Naive thymus-derived CD4-positive, alpha-beta T cell (primary cell): ENCODE measurements at regions of chr16 and their contacts with region 1.

Region 1: GRCh38 chr16:1782352-1783091 is at the starts of genes NUBP2 and SPSB3:
- DNase-seq: peak; percentile 83 to 98 (median 97)
- ATAC-seq: peak; percentile 92
- H3K4me3 ChIP-seq: peak within 1 kb of the TSS; percentile 92
- H3K4me3 Mint-ChIP-seq: peak within 1 kb of the TSS; percentile 90 to 98 (median 94)
- H3K27ac ChIP-seq: peak within 1 kb of the TSS; percentile 76
- H3K27ac Mint-ChIP-seq: peak within 1 kb of the TSS; percentile 77 to 98 (median 93)
- H3K4me1 ChIP-seq: peaks cover 13 to 28% of the 10 kb centered on the region in 2 donors
- H3K4me1 Mint-ChIP-seq: peaks cover 0 to 48% (median 22%) of the 10 kb centered on the region in 7 donors
- H3K27me3 ChIP-seq: no peaks in the 10 kb centered on the region
- H3K27me3 Mint-ChIP-seq: peaks cover 0 to 2% (median 0%) of the 10 kb centered on the region in 5 donors
- total RNA-seq, gene NUBP2: 39.3 to 60.2 (median 48.6) TPM
- total RNA-seq, gene SPSB3: 38.2 to 127 (median 72.3) TPM

Region 2: DNA sequence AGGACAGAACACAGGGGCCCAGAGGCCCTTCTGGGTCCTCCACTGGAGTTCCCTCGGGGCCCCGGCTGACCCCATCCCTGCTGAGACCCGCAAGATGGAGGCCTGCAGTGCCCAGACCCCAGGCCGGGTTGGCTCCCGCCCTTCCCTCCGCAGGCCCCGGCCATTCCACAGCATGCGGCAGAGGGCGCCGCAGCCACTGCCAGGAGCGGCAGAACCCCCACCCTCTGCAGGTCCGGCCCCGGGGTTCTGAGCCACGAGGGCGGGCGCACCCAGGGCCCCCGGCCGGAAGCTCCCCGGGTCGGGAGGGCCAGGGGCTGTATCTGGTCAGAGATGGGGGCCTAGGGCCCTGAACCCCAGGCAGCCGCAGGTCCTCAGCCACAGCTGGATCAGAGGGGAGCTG is 354.0 kb before region 1 on chr16:
- CTCF ChIA-PET with region 1: no interaction called
- POLR2A ChIA-PET with region 1: interaction called, 4 read pairs
- intact Hi-C with region 1: loop called in 1 of 2 experiments (anchors 10 kb)
- DNase-seq: peak in 6 of 9 donors; percentile 23 to 63 (median 38)
- ATAC-seq: peak; percentile 73
- H3K4me3 ChIP-seq: no peak overlapping the region
- H3K4me3 Mint-ChIP-seq: peak overlapping the region in 1 of 10 donors; percentile 53
- H3K27ac ChIP-seq: no peak overlapping the region
- H3K27ac Mint-ChIP-seq: no peak overlapping the region
- H3K4me1 ChIP-seq: no peaks in the 10 kb centered on the region
- H3K4me1 Mint-ChIP-seq: peaks cover 0 to 3% (median 0%) of the 10 kb centered on the region in 7 donors
- H3K27me3 ChIP-seq: no peaks in the 10 kb centered on the region
- H3K27me3 Mint-ChIP-seq: peaks cover 0 to 2% (median 0%) of the 10 kb centered on the region in 5 donors

Region 3: DNA sequence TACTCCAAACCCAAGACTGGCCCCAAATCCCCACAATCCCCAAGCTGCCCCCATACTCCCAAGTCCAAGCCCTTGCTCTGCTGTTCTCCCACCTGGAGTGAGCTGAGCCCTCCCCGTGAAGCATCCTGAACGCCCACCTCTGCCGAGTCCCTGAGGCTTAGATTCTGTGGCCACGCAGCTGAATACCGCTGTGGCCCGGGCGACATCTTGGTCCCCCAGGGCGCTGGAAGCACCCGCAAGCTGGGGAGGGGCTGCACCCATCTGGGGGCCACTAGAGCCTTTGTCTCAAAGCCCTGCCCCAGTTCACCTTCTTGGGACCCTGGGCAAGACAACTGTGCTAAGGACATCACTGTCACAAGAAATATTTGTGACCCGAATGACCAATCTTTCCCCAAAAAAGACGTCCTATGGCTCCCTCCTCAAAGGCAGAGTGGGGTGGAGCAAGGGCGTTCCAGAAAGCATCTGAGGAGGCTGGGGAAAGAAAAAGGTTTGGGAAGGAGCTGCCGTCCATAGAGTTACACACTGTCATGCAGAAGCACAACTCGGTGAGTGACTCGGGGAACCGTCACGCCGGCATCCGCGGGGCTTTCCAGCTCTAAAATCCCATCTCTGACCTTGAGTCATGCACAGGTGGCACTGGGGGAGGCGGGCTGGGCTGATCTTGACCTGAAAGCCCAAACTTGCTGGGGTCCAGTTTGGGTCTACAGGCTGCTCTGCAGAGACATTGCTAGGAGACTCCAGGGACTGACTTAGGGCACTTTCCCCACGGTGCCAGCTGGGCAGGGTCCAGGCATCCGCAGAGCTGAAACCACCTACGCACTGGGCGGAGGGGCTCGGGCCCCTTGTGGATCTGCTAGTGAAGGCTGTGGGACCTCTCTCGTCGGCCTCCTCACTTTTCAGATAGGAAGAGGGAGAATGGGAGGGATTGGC is 300.4 kb before region 1 on chr16:
- CTCF ChIA-PET with region 1: no interaction called
- POLR2A ChIA-PET with region 1: no interaction called
- intact Hi-C with region 1: no loop called
- DNase-seq: no peak
- ATAC-seq: no peak
- H3K4me3 ChIP-seq: no peak overlapping the region
- H3K4me3 Mint-ChIP-seq: no peak overlapping the region
- H3K27ac ChIP-seq: no peak overlapping the region
- H3K27ac Mint-ChIP-seq: no peak overlapping the region
- H3K4me1 ChIP-seq: no peaks in the 10 kb centered on the region
- H3K4me1 Mint-ChIP-seq: peaks cover 0 to 4% (median 0%) of the 10 kb centered on the region in 7 donors
- H3K27me3 ChIP-seq: no peaks in the 10 kb centered on the region
- H3K27me3 Mint-ChIP-seq: peaks cover 0 to 3% (median 0%) of the 10 kb centered on the region in 5 donors

Region 4: DNA sequence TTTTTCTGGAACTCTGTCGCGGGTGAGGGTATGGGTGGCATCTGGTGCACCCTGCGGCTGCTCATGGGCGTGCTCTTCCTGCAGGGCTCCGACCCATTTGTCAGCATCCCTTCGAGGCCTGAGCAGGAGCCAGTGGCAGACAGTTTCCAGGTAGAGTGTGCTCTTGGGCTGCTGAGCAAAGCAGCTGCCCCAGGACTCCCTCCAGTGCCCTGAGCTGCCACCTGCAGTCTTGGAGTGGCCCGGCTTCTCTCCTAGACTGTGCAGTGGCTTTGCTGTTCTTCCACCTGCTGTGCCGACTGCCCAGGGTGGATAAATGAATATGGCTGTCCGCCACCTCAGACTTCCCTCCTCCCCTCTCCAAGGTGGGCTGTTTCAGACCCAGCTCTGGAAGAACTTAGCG is 115.3 kb before region 1 on chr16:
- CTCF ChIA-PET with region 1: no interaction called
- POLR2A ChIA-PET with region 1: no interaction called
- intact Hi-C with region 1: no loop called
- DNase-seq: no peak
- ATAC-seq: no peak
- H3K4me3 ChIP-seq: no peak overlapping the region
- H3K4me3 Mint-ChIP-seq: no peak overlapping the region
- H3K27ac ChIP-seq: no peak overlapping the region
- H3K27ac Mint-ChIP-seq: peak overlapping the region in 1 of 9 donors; percentile 24
- H3K4me1 ChIP-seq: no peaks in the 10 kb centered on the region
- H3K4me1 Mint-ChIP-seq: no peaks in the 10 kb centered on the region
- H3K27me3 ChIP-seq: no peaks in the 10 kb centered on the region
- H3K27me3 Mint-ChIP-seq: no peaks in the 10 kb centered on the region

Region 5: GRCh38 chr16:2115591-2115973 is 333.1 kb after region 1 on chr16:
- CTCF ChIA-PET with region 1: no interaction called
- POLR2A ChIA-PET with region 1: no interaction called
- intact Hi-C with region 1: no loop called
- DNase-seq: no peak
- ATAC-seq: no peak
- H3K4me3 ChIP-seq: no peak overlapping the region
- H3K4me3 Mint-ChIP-seq: no peak overlapping the region
- H3K27ac ChIP-seq: no peak overlapping the region
- H3K27ac Mint-ChIP-seq: no peak overlapping the region
- H3K4me1 ChIP-seq: no peaks in the 10 kb centered on the region
- H3K4me1 Mint-ChIP-seq: peaks cover 0 to 5% (median 4%) of the 10 kb centered on the region in 7 donors
- H3K27me3 ChIP-seq: no peaks in the 10 kb centered on the region
- H3K27me3 Mint-ChIP-seq: no peaks in the 10 kb centered on the region